Dorsolateral prefrontal cortex (tissue), 120 donors: ENCODE measurements at regions of chr1 and their contacts with region 1.

Region 1: GRCh38 chr1:11838349-11839272 is 9.0 kb downstream of the NPPA start:
- DNase-seq: peak; percentile 65 to 89 (median 76)
- H3K4me3 ChIP-seq: peak overlapping the region in 1 of 59 donors; percentile 18
- H3K27ac ChIP-seq: peak overlapping the region in 7 of 59 donors; percentile 3 to 38 (median 28)
- H3K27me3 ChIP-seq: no peaks in the 10 kb centered on the region
- CTCF ChIP-seq: peak; percentile 84 to 100 (median 97)

Region 2: DNA sequence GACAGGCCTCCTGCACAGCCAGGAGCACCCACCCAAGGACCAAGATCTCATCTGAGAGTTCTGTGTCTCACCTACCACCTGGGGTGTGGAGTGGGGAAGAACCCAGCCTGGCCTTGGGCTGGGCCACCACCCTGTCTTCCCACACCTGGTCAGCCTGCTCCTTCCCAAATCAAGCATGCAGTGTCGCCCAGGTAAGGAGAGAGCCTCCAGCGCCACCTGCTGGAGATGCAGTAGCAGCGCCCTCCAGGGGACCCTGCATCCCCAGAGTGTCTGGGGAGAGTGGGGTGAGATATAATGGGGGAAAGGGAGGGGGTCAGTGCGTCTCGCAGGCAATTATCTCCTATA is 55.3 kb after region 1 on chr1:
- intact Hi-C with region 1: loop called (anchors 2 to 5 kb)
- DNase-seq: peak in 7 of 10 donors; percentile 27 to 75 (median 46)
- H3K4me3 ChIP-seq: no peak overlapping the region
- H3K27ac ChIP-seq: no peak overlapping the region
- H3K27me3 ChIP-seq: peaks cover 0 to 22% (median 10%) of the 10 kb centered on the region in 45 donors
- CTCF ChIP-seq: peak; percentile 44 to 87 (median 78)

Region 3: DNA sequence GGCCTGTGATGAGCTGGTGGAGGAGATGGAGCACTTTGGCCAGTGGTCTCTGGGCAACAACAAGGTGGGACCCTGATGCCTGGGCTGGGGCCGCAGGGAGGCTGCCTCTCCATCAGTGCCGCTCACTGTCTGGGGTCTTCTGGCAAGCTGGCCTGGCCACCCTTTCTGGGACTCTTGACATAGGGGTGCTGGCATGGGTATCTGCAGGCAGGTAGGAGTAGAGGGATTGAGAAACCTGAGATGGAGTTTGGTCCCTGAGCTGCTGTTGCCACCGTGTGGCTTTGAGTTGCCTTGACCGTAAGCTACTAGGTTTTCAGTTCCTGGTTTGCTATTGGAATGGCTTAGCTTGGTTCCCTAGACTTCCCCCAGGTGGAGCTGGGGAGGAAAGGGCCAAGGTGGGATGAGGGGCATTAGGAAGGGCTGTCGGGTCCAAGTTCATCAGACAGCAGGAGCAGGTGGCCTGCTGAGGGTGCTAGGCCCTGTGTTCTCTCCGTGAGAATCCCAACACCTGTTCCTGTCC is 128.5 kb after region 1 on chr1:
- intact Hi-C with region 1: loop called in 1 of 2 experiments (anchors 5 kb)
- DNase-seq: peak in 2 of 10 donors; percentile 27 to 55
- H3K4me3 ChIP-seq: no peak overlapping the region
- H3K27ac ChIP-seq: peak overlapping the region in 5 of 59 donors; percentile 3 to 38 (median 9)
- H3K27me3 ChIP-seq: no peaks in the 10 kb centered on the region
- CTCF ChIP-seq: peak in 38 of 56 donors; percentile 13 to 61 (median 37)

Region 4: GRCh38 chr1:12031039-12031980 is 192.7 kb after region 1 on chr1:
- intact Hi-C with region 1: loop called in 1 of 2 experiments (anchors 5 kb)
- DNase-seq: peak in 2 of 10 donors; percentile 45 to 55
- H3K4me3 ChIP-seq: no peak overlapping the region
- H3K27ac ChIP-seq: no peak overlapping the region
- H3K27me3 ChIP-seq: no peaks in the 10 kb centered on the region
- CTCF ChIP-seq: peak in 47 of 56 donors; percentile 11 to 63 (median 39)

Region 5: DNA sequence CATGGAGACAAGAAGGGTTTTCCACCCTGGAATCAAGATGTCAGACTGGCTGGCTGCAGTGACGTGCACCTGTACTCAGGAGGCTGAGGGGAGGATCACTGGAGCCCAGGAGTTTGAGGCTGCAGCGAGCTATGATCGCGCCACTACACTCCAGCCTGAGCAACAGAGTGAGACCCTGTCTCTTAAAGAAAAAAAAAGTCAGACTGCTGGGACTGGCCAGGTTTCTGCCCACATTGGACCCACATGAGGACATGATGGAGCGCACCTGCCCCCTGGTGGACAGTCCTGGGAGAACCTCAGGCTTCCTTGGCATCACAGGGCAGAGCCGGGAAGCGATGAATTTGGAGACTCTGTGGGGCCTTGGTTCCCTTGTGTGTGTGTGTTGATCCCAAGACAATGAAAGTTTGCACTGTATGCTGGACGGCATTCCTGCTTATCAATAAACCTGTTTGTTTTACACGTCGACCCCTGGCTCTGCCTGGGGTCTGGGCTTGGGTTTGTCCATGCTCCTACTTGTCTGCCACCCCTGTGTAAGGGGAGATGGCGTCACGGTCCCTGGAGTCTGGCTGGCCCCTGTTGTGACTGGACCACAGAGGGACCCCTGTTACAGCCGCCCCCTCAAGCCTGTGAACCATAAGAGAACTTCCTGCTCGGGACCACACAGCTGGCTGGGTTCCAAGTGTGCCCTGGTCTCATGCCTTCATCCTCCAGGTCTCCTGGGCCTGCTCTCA is 370.3 kb after region 1 on chr1:
- intact Hi-C with region 1: loop called in 1 of 2 experiments (anchors 2 kb)
- DNase-seq: peak; percentile 80 to 94 (median 86)
- H3K4me3 ChIP-seq: no peak overlapping the region
- H3K27ac ChIP-seq: peak overlapping the region in 2 of 59 donors; percentile 18 to 51
- H3K27me3 ChIP-seq: no peaks in the 10 kb centered on the region
- CTCF ChIP-seq: peak; percentile 71 to 99 (median 96)